ENCODE measurements at regions of chr2 and their contacts with region 1.

Region 1: GRCh38 chr2:26959331-26959730 is 11.1 kb upstream of the MAPRE3 start:
- DNase-seq: no peak
- H3K4me3 Mint-ChIP-seq: no peak overlapping the region
- H3K27ac Mint-ChIP-seq: no peak overlapping the region
- H3K4me1 Mint-ChIP-seq: peaks cover 3% of the 10 kb centered on the region
- H3K27me3 Mint-ChIP-seq: peaks cover 29% of the 10 kb centered on the region

Region 2: DNA sequence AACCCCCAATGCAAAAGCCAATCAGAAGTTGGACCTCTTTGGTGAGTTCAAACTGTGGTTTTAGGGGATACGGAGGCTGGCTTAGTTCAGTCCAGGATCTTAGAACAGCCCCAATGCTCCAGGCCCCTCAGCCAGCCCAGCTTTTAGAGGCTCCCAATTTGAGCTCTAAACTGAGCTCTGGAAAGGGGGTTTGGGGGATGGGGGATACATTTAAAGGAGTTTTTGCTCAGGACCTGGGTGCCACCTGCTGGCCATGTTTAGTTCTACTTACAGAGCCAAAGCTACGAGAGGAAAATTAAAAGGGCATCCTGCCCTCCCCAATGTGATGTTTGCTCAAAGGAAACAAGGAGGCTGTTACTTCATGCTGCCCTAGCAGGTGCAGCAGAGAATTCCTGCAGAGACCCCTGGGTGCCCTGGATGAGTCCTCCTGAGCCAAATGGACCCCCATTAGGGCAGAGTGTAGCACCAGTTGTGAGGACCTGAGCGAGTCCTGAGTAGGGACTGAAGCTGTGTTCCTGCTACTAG is 57.5 kb after region 1 on chr2:
- intact Hi-C with region 1: loop called (anchors 1 kb)
- DNase-seq: peak; percentile 81
- H3K4me3 Mint-ChIP-seq: no peak overlapping the region
- H3K27ac Mint-ChIP-seq: no peak overlapping the region
- H3K4me1 Mint-ChIP-seq: peaks cover 5% of the 10 kb centered on the region
- H3K27me3 Mint-ChIP-seq: no peaks in the 10 kb centered on the region

Region 3: DNA sequence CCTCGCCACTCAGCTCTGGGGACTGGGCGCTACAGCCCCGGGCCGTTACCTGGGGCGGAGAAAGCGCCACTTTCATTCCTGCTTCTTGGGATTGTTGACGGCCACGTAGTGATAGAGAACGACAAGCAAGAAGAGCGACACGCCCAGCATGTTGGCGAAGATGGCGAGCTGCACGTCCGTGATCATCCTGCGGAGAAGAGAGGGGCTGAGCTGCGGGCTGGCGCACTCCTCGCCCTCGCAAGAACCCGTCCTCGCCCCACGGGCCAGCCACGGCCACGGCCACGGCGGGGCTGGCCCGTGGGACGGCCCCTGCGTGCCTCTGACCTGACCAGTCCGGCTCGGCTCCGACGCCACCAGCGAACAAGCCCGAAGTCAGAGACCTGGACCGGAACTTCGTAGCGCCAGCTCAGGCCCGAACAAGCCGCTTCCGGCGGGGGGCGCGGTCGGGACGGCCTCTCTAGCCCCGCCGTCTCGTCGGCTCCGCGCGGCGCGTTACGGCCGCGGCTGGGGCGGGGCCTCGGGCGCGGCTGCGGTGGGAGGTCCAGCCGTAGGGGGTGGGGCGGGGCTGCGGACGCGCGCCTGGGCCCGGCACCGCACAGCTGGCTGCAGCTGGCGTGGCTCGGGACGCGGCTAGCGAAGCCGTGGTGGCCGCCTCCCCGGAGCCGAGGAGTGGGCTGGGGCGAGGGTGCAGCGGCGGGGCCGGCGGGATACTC is 112.1 kb after region 1 on chr2 and contains the start of gene OST4:
- intact Hi-C with region 1: loop called (anchors 1 kb)
- DNase-seq: peak; percentile 98
- H3K4me3 Mint-ChIP-seq: peak within 1 kb of the TSS; percentile 99
- H3K27ac Mint-ChIP-seq: peak within 1 kb of the TSS; percentile 93
- H3K4me1 Mint-ChIP-seq: peaks cover 58% of the 10 kb centered on the region
- H3K27me3 Mint-ChIP-seq: no peaks in the 10 kb centered on the region
- total RNA-seq, gene OST4: 314 and 326 TPM in 2 replicates

Region 4: GRCh38 chr2:27191053-27191829 is 231.9 kb after region 1 on chr2:
- intact Hi-C with region 1: loop called (anchors 1 kb)
- DNase-seq: peak; percentile 86
- H3K4me3 Mint-ChIP-seq: no peak overlapping the region
- H3K27ac Mint-ChIP-seq: no peak overlapping the region
- H3K4me1 Mint-ChIP-seq: no peaks in the 10 kb centered on the region
- H3K27me3 Mint-ChIP-seq: peaks cover 20% of the 10 kb centered on the region

Region 5: DNA sequence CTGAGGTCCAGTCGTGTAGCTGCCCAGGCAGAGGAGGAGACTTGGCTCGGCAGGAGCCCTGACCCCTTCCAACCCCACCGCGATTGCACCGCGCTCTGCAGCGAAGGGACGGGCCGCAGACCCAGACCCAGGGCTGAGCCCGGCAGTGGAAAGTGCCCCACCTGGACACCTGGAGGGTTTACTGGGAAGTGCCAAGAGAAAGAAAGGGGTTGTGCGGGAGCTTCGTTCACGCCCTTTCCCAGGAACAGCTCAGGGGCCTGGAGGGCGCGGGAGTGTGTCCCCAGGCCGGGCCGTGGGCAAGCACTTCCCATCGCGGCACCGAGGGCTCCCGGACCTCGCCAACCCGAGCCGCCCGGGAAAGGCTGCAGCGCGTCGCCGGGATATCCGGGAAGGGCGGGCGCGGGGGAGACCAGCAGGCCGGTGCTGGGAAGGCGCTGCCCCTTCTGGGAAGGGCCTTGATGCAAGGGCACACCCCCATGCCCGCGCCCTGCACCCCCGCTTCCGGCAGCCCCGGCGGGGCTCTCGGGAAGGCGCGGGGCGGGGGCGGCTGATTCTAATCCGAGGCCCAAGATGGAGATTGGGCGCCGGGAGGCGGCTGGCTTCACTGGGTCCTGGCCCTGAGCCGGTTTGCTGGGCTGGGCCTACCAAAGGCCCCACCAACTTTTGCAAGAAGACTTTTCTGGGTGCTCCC is 776.1 kb after region 1 on chr2:
- intact Hi-C with region 1: no loop called
- DNase-seq: peak; percentile 82
- H3K4me3 Mint-ChIP-seq: peak overlapping the region; percentile 56
- H3K27ac Mint-ChIP-seq: peak overlapping the region; percentile 1
- H3K4me1 Mint-ChIP-seq: peaks cover 20% of the 10 kb centered on the region
- H3K27me3 Mint-ChIP-seq: no peaks in the 10 kb centered on the region

Measured in activated CD4-positive, alpha-beta T cell treated with anti-CD3 and anti-CD28 coated beads, Interleukin-2, amount 10 ng/mL, durations not matched to agents 24 days and 14 days (primary cell).